ENCODE measurements at regions of chr20 and their contacts with region 1.

Region 1: DNA sequence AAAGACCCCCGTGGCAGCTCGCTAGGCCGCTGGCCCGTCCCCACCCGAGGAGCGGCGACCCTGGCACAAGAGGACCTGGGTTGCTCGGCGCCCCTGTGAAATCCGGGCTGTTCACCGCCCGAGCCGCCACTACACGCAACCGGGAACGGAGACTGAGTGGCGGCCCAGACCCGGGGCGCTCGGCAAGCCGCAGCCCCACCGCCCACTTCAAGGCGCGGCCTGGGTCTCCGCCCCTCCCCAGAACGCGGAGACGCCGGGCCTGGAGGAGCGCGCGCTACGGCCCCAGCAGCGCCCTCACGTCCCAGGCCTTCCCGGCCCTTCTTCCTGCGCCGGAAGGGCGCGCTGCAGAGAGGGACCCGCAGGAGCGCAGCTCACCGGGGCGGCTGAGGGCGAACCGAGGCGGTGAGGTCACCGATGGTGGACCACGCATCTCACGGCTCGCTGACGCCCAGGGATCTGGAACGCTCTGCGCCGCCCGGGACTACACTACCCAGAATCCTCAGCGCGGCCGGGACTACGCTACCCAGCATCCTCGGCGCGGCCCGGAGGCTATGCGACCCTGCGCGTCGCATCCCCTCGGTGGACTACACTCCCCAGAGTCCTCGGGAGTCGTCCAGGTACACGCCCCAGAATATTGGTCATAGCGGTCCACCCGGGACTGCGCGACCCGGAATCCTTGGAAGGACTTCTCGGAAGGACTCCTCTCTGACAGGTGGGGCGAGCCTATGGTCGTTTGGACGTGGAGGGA is at the start of gene ZNF337:
- DNase-seq: peak; percentile 93
- H3K4me3 Mint-ChIP-seq: peak within 1 kb of the TSS; percentile 91
- H3K27ac Mint-ChIP-seq: peak within 1 kb of the TSS; percentile 93
- H3K4me1 Mint-ChIP-seq: peaks cover 33% of the 10 kb centered on the region
- H3K27me3 Mint-ChIP-seq: peaks cover 2% of the 10 kb centered on the region
- total RNA-seq, gene ZNF337: 13.9 and 14.6 TPM in 2 replicates

Region 2: GRCh38 chr20:24948939-24949679 is 747.4 kb before region 1 on chr20 and contains the start of gene CST7:
- intact Hi-C with region 1: loop called (anchors 1 kb)
- DNase-seq: peak; percentile 81
- H3K4me3 Mint-ChIP-seq: peak within 1 kb of the TSS; percentile 90
- H3K27ac Mint-ChIP-seq: peak within 1 kb of the TSS; percentile 99
- H3K4me1 Mint-ChIP-seq: peaks cover 74% of the 10 kb centered on the region
- H3K27me3 Mint-ChIP-seq: no peaks in the 10 kb centered on the region
- total RNA-seq, gene CST7: 127 and 133 TPM in 2 replicates

Region 3: GRCh38 chr20:25247956-25248785 is 448.4 kb before region 1 on chr20 and contains the start of gene PYGB:
- intact Hi-C with region 1: loop called (anchors 5 kb)
- DNase-seq: peak; percentile 69
- H3K4me3 Mint-ChIP-seq: peak within 1 kb of the TSS; percentile 92
- H3K27ac Mint-ChIP-seq: peak within 1 kb of the TSS; percentile 87
- H3K4me1 Mint-ChIP-seq: peaks cover 43% of the 10 kb centered on the region
- H3K27me3 Mint-ChIP-seq: no peaks in the 10 kb centered on the region
- total RNA-seq, gene PYGB: 36.8 and 38.5 TPM in 2 replicates

Region 4: DNA sequence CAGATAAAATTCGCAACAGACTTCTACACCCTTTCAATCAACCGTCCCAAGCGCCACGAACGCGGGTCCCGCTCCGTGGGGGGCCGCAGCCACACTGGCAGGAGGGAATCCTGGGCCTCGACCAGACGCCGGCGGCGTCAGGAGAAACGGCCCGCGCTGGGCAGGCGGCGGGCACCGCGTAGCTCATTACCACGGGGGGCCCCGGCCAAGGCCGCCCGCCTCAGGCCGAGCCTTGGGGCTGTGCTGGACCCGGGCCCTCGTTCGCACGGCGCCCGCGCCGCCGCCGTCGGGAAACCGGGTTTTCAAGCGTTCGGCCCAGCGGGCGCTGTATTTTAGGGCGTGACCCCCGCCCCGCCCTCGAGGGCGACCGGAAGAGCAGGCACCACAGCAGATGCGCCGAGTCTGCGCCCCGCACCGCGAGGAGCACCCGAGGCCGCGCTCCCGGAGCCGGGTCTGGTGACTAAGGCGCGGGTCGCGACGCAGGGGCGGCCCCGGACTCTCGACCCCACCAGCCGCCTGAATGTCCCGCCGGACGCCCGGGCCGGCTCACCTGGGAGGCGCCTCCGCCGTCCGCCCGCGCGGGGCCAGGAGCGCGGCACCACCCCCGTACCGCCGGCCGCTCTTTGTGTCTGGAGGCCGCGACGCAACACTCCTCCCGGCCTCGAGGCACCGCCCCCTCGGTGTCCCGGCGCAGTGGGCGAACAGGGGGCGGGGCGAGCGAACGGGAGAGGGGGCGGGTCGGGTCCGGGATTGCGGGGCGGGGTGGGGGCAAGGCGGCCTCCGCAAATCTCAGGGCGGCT is 111.5 kb before region 1 on chr20 and contains the start of gene NINL:
- intact Hi-C with region 1: loop called (anchors 2 kb)
- DNase-seq: peak; percentile 50
- H3K4me3 Mint-ChIP-seq: peak within 1 kb of the TSS; percentile 84
- H3K27ac Mint-ChIP-seq: peak within 1 kb of the TSS; percentile 64
- H3K4me1 Mint-ChIP-seq: peaks cover 12% of the 10 kb centered on the region
- H3K27me3 Mint-ChIP-seq: peaks cover 8% of the 10 kb centered on the region
- total RNA-seq, gene NINL: 2.0 and 2.5 TPM in 2 replicates

Region 5: GRCh38 chr20:25750765-25751696 is 54.5 kb after region 1 on chr20:
- intact Hi-C with region 1: loop called (anchors 1 kb)
- DNase-seq: peak; percentile 34
- H3K4me3 Mint-ChIP-seq: peak overlapping the region; percentile 83
- H3K27ac Mint-ChIP-seq: peak overlapping the region; percentile 67
- H3K4me1 Mint-ChIP-seq: peaks cover 8% of the 10 kb centered on the region
- H3K27me3 Mint-ChIP-seq: peaks cover 2% of the 10 kb centered on the region